Activated CD8-positive, alpha-beta memory T cell treated with anti-CD3 and anti-CD28 coated beads, Interleukin-2, amount 10 ng/mL, durations not matched to agents 7 days and 5 days (primary cell): ENCODE measurements at regions of chr22 and their contacts with region 1.

Region 1: GRCh38 chr22:39496131-39496838 is 5.8 kb upstream of the MIEF1 start:
- DNase-seq: peak; percentile 68
- ATAC-seq: peak; percentile 69
- H3K4me3 Mint-ChIP-seq: no peak overlapping the region
- H3K27ac Mint-ChIP-seq: no peak overlapping the region
- H3K4me1 Mint-ChIP-seq: peaks cover 10% of the 10 kb centered on the region
- H3K27me3 Mint-ChIP-seq: peaks cover 4% of the 10 kb centered on the region

Region 2: DNA sequence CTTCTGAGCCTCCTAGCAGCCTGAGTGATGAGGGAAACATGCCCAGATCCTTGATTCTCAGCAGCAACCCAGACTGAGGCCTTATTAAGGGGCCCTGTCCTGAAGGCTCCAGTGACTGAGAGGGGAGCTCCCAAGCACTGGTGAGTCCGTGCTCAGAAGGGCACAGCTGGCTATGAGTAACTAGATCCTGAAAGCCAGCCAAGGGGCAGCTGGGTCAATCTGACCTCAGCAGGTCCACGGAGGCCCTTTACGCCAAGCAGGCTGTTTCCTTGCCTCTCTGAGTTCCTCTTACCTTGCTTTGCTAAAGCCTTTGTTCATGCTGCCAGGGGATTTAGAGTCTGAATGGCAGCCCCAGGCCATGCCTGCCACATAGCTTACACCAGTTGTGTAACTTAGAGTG is 13.5 kb before region 1 on chr22:
- CTCF ChIA-PET with region 1: interaction called, 12 read pairs
- DNase-seq: no peak
- ATAC-seq: no peak
- H3K4me3 Mint-ChIP-seq: no peak overlapping the region
- H3K27ac Mint-ChIP-seq: no peak overlapping the region
- H3K4me1 Mint-ChIP-seq: no peaks in the 10 kb centered on the region
- H3K27me3 Mint-ChIP-seq: peaks cover 6% of the 10 kb centered on the region